Transverse colon (tissue), 4 donors: ENCODE measurements at regions of chr14 and their contacts with region 1.

Region 1: GRCh38 chr14:76352639-76353281 is 23.2 kb upstream of the ESRRB start:
- DNase-seq: peak; percentile 20
- H3K4me3 ChIP-seq: peak overlapping the region in 1 of 4 donors; percentile 28
- H3K27ac ChIP-seq: no peak overlapping the region
- H3K4me1 ChIP-seq: peaks cover 0 to 5% (median 2%) of the 10 kb centered on the region in 4 donors
- H3K27me3 ChIP-seq: peaks cover 15% of the 10 kb centered on the region
- CTCF ChIP-seq: peak; percentile 61 to 78 (median 69)
- EP300 ChIP-seq: no peak
- POLR2A ChIP-seq: no peak

Region 2: DNA sequence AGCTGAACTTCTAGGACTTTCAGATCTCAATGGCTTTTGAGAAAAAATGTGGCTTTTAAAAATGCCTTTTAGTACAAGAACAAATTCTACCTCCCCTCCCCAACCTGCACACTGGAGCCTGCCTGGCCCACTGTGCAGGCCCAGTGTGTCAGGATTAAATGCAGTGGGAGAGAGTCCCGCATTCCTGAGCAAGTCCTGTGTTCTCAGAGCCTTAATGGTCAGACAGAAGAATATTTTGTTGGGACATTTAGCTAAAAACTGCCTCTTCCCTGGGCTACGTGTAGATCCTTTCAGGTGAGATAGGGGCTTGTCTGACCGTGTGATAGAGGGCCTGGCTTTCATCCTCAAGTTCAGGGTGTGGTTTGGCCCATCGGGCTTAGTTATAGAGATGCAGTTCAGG is 39.9 kb before region 1 on chr14:
- in situ Hi-C with region 1: no loop called
- intact Hi-C with region 1: loop called (anchors 1 kb)
- DNase-seq: no peak
- H3K4me3 ChIP-seq: no peak overlapping the region
- H3K27ac ChIP-seq: no peak overlapping the region
- H3K4me1 ChIP-seq: no peaks in the 10 kb centered on the region
- H3K27me3 ChIP-seq: peaks cover 24% of the 10 kb centered on the region
- CTCF ChIP-seq: no peak
- EP300 ChIP-seq: no peak
- POLR2A ChIP-seq: no peak